Activated CD4-positive, alpha-beta memory T cell treated with anti-CD3 and anti-CD28 coated beads for 36 hours (primary cell): ENCODE measurements at regions of chr12 and their contacts with region 1.

Region 1: GRCh38 chr12:68831272-68831671 is 23.3 kb downstream of the MDM2 start:
- DNase-seq: no peak
- H3K4me3 Mint-ChIP-seq: no peak overlapping the region
- H3K27ac Mint-ChIP-seq: no peak overlapping the region
- H3K4me1 Mint-ChIP-seq: peaks cover 15% of the 10 kb centered on the region
- H3K27me3 Mint-ChIP-seq: no peaks in the 10 kb centered on the region

Region 2: GRCh38 chr12:68815928-68816800 is 15.1 kb before region 1 on chr12:
- CTCF ChIA-PET with region 1: interaction called, 27 read pairs
- POLR2A ChIA-PET with region 1: interaction called, 4 read pairs
- intact Hi-C with region 1: no loop called
- DNase-seq: no peak
- H3K4me3 Mint-ChIP-seq: no peak overlapping the region
- H3K27ac Mint-ChIP-seq: no peak overlapping the region
- H3K4me1 Mint-ChIP-seq: peaks cover 47% of the 10 kb centered on the region
- H3K27me3 Mint-ChIP-seq: no peaks in the 10 kb centered on the region

Region 3: GRCh38 chr12:68841717-68842116 is 10.4 kb after region 1 on chr12:
- CTCF ChIA-PET with region 1: interaction called, 17 read pairs
- POLR2A ChIA-PET with region 1: interaction called, 4 read pairs
- intact Hi-C with region 1: no loop called
- DNase-seq: no peak
- H3K4me3 Mint-ChIP-seq: no peak overlapping the region
- H3K27ac Mint-ChIP-seq: no peak overlapping the region
- H3K4me1 Mint-ChIP-seq: peaks cover 7% of the 10 kb centered on the region
- H3K27me3 Mint-ChIP-seq: no peaks in the 10 kb centered on the region

Region 4: GRCh38 chr12:68910128-68910527 is 78.9 kb after region 1 on chr12:
- CTCF ChIA-PET with region 1: no interaction called
- POLR2A ChIA-PET with region 1: no interaction called
- intact Hi-C with region 1: no loop called
- DNase-seq: no peak
- H3K4me3 Mint-ChIP-seq: no peak overlapping the region
- H3K27ac Mint-ChIP-seq: no peak overlapping the region
- H3K4me1 Mint-ChIP-seq: peaks cover 4% of the 10 kb centered on the region
- H3K27me3 Mint-ChIP-seq: no peaks in the 10 kb centered on the region

Region 5: DNA sequence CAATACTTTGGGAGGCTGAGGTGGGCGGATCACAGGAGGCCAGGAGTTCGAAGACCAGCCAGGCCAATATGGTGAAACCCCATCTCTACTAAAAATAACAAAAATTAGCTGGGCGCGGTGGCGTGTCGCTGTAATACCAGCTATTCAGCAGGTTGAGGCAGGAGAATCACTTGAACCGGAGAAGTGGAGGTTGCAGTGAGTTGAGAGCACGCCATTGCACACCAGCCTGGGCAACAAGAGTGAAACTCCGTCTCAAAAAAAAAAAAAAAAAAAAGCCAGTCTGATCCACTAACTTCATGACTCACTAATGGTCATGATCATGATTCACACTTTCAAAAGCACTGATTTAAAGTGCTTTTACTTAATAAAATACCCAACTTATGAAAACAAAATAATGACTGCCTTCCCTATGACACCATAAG is 140.1 kb after region 1 on chr12:
- CTCF ChIA-PET with region 1: no interaction called
- POLR2A ChIA-PET with region 1: no interaction called
- intact Hi-C with region 1: no loop called
- DNase-seq: no peak
- H3K4me3 Mint-ChIP-seq: no peak overlapping the region
- H3K27ac Mint-ChIP-seq: no peak overlapping the region
- H3K4me1 Mint-ChIP-seq: peaks cover 2% of the 10 kb centered on the region
- H3K27me3 Mint-ChIP-seq: peaks cover 1% of the 10 kb centered on the region